Activated naive CD4-positive, alpha-beta T cell treated with anti-CD3 and anti-CD28 coated beads, Interleukin-2, amount 10 ng/mL, durations not matched to agents 7 days and 5 days (primary cell): ENCODE measurements at regions of chr21 and their contacts with region 1.

Region 1: DNA sequence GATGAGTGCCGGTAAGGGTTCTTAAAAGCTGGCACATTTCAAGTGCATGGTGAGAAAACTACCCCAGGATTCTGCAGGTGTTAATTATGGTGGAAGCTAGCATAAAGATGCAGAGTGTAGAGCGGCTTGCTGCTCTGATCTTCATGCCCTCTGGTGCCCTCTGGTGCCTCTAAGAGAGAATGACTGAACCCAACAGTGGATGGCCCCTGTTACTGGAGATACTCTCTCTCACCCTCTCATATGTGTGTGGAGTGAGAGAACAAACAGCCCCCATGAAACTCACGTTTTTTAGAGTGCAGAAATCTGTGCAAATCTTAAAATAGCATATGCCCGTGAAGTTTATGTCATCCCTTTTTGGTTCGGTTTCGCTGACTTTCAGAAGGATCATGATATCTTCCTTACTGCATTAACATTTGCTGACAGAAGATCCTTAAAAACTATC is 90.0 kb downstream of the GRIK1 start:
- DNase-seq: peak; percentile 58
- H3K4me3 Mint-ChIP-seq: no peak overlapping the region
- H3K27ac Mint-ChIP-seq: no peak overlapping the region
- H3K4me1 Mint-ChIP-seq: no peaks in the 10 kb centered on the region
- H3K27me3 Mint-ChIP-seq: no peaks in the 10 kb centered on the region

Region 2: DNA sequence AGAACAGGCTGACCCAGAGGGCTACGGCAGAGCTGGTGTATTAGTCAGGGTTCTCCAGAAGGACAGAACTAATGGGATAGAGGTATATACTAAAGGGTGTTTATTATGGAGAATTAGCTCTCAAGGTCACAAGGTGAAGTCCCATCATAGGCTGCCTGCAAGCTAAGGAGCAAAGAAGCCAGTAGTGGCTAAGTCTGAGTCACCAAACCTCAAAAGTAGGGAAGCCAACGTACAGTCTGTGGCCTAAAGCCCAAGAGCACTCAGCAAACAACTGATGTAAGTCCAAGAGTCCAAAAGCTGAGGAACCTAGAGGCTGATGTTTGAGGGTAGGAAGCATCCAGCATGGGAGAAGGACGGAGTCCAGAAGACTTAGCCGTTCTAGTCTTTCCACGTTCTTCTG is 371.8 kb before region 1 on chr21:
- CTCF ChIA-PET with region 1: interaction called, 53 read pairs
- DNase-seq: no peak
- H3K4me3 Mint-ChIP-seq: no peak overlapping the region
- H3K27ac Mint-ChIP-seq: no peak overlapping the region
- H3K4me1 Mint-ChIP-seq: peaks cover 11% of the 10 kb centered on the region
- H3K27me3 Mint-ChIP-seq: no peaks in the 10 kb centered on the region

Region 3: DNA sequence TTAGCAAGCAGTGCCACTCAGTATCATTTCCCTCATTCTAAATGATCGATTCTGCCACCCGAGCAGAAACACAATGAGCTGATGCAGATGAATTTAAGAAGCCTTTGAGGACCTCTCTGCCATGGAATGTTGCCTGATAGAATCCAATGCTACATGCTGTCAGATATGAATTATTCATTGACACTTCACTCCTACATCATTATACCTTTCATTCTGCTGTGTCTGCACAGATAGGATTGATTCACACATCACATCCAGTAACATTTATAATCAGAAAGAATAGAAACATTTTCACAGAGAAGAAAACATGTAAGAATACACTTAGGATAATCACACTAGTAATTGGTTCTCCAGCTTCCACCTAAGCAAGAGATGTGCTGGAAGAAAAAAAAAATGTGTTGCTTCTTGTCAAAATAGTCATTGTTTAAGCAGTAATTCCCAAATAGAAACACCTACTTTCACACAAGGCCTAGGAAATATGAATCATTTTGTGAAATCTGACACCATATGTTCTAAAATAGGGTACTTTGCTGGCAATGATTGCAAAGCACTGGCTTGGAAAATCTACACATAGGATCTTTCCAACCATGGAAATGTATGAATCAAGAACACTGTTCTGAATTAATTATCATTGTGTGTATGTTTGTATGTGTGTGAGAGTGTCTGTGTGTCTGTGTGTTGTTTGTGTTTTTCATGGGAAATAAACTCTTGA is 20.0 kb before region 1 on chr21:
- CTCF ChIA-PET with region 1: no interaction called
- DNase-seq: no peak
- H3K4me3 Mint-ChIP-seq: no peak overlapping the region
- H3K27ac Mint-ChIP-seq: no peak overlapping the region
- H3K4me1 Mint-ChIP-seq: no peaks in the 10 kb centered on the region
- H3K27me3 Mint-ChIP-seq: no peaks in the 10 kb centered on the region